ENCODE measurements at regions of chr6 and their contacts with region 1.

Region 1: DNA sequence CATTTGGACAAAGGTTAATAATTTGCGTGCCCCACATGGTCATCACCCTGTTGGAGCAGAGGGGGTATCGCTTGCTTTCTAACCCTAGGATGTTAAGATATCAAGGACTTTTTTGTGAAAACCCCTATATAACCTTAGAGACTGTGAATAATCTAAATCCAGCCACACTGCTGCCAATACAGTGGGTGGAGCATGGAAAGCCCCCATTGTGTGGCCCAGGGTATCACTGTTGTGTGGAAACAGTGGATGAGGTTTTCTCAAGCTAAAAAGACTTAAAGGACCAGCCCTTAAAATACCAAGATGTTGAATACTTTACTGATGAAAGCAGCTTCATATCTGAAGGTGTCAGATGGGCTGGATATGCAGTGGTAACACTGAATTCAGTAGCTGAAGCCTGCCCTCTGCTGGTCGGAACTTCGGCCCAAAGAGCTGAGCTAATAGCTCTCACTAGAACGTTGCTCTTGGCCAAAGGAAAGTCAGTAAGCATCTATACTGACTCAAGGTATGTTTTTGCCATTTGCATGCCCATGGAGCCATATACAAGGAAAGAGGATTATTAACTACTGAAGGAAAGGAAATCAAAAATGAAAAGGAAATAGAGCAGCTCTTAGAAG is 695.2 kb downstream of the PHF3 start:
- DNase-seq: peak; percentile 21 to 90
- H3K4me3 ChIP-seq: no peak overlapping the region
- H3K27ac ChIP-seq: no peak overlapping the region
- H3K4me1 ChIP-seq: no peaks in the 10 kb centered on the region
- H3K27me3 ChIP-seq: no peaks in the 10 kb centered on the region
- CTCF ChIP-seq: peak; percentile 58 to 81 (median 62)
- EP300 ChIP-seq: no peak
- POLR2A ChIP-seq: no peak
- RAD21 ChIP-seq: peak; percentile 82

Region 2: DNA sequence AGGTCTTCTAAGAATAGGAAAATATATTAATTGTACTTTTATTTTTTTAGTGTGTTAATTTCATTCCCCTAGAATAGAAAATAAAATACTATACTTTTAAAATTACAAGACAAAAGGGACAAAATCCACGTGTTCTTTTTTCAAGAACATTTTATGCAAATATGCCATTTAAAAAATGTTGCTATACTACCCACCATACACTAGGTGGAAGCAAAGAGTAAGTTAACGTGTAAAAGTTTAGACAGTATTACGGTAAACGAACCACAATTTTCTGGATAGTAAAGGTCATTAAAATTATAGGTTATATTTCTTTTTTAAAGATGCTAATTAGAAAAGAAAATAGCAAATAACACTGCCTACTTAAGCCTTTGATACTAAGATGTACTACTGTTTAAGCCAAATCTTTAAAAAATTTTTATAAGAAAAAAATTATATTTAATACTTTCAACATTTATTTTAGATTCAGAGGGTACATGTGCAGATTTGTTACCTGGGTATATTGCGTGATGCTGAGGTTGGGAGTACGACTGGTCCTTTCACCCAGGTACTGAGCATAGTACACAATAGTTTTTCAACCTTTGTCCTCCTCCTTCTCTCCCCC is 407.6 kb before region 1 on chr6:
- CTCF ChIA-PET with region 1: interaction called, 23 read pairs
- POLR2A ChIA-PET with region 1: no interaction called
- DNase-seq: no peak
- H3K4me3 ChIP-seq: no peak overlapping the region
- H3K27ac ChIP-seq: no peak overlapping the region
- H3K4me1 ChIP-seq: no peaks in the 10 kb centered on the region
- H3K27me3 ChIP-seq: no peaks in the 10 kb centered on the region
- CTCF ChIP-seq: peak in 2 of 3 experiments; percentile 31 to 51; a peak in 2 of 4 replicates
- EP300 ChIP-seq: no peak
- POLR2A ChIP-seq: no peak
- RAD21 ChIP-seq: peak in 1 of 2 experiments; percentile 76

Region 3: DNA sequence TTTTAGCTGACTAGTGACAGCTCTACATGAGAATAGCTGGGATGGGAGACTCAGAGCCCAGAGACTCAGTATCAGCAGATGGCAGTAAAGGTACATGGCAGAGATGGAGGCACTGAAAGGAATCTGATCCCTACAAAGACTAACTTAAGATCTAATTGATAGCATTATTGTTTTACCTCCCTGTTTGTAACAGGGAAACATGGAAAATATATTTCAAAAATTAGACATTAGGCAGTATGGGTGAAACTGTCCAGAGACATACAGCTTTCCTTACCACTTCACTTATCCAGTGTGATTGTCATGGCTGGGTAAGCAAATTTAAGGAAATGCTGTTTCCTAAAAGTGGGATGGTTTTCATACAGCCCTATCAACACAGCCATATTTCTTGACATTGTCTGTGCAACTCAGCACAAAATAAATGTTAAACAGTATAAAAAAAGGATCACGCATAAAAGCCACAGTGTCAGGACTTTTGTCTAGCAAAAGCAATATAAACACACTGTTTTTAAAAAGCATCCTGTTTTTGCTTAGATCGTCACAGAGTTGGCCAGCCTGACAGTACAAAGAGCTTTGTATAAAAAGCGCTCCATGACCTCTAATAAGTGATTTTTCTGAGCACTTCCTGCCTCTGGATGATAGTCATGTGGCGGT is 318.3 kb before region 1 on chr6:
- CTCF ChIA-PET with region 1: interaction called, 47 read pairs
- POLR2A ChIA-PET with region 1: no interaction called
- DNase-seq: peak in 1 of 2 experiments; percentile 13
- H3K4me3 ChIP-seq: no peak overlapping the region
- H3K27ac ChIP-seq: no peak overlapping the region
- H3K4me1 ChIP-seq: peaks cover 0 to 3% (median 3%) of the 10 kb centered on the region in 4 experiments; a peak in 2 of 7 replicates
- H3K27me3 ChIP-seq: no peaks in the 10 kb centered on the region
- CTCF ChIP-seq: peak in 2 of 3 experiments; percentile 75 to 87; a peak in 3 of 4 replicates
- EP300 ChIP-seq: no peak
- POLR2A ChIP-seq: no peak
- RAD21 ChIP-seq: peak; percentile 94 to 96

Region 4: GRCh38 chr6:64280569-64280968 is 50.2 kb before region 1 on chr6:
- CTCF ChIA-PET with region 1: interaction called, 13 read pairs
- POLR2A ChIA-PET with region 1: no interaction called
- DNase-seq: no peak
- H3K4me3 ChIP-seq: no peak overlapping the region
- H3K27ac ChIP-seq: no peak overlapping the region
- H3K4me1 ChIP-seq: peaks cover 0 to 2% (median 0%) of the 10 kb centered on the region in 4 experiments; a peak in 1 of 7 replicates
- H3K27me3 ChIP-seq: no peaks in the 10 kb centered on the region
- CTCF ChIP-seq: peak in 2 of 3 experiments; percentile 30 to 35; a peak in 3 of 4 replicates
- EP300 ChIP-seq: no peak
- POLR2A ChIP-seq: no peak
- RAD21 ChIP-seq: peak; percentile 67 to 69

Region 5: DNA sequence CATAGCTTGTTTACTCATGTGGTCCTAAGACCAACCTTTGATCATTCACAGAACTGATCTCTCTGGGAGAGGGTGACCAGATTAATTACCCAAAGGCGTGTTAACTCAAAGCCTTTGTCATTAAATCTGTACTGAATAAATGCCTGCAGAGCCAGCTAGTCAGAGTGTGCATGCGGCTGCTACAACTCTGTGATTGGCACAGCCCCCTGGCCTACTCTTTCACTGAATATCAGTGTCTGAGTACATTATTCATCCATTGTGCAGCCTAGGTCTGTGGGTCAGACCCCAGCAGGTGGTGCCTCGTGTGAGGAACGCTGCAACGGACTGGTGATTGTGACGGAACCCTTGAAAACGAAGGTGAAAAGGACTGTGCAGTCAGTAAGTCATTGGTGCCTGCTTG is 31.6 kb before region 1 on chr6:
- CTCF ChIA-PET with region 1: interaction called, 11 read pairs
- POLR2A ChIA-PET with region 1: no interaction called
- DNase-seq: no peak
- H3K4me3 ChIP-seq: no peak overlapping the region
- H3K27ac ChIP-seq: no peak overlapping the region
- H3K4me1 ChIP-seq: no peaks in the 10 kb centered on the region
- H3K27me3 ChIP-seq: no peaks in the 10 kb centered on the region
- CTCF ChIP-seq: no peak
- EP300 ChIP-seq: no peak
- POLR2A ChIP-seq: no peak
- RAD21 ChIP-seq: no peak